Naive thymus-derived CD8-positive, alpha-beta T cell (primary cell): ENCODE measurements at regions of chr2 and their contacts with region 1.

Region 1: GRCh38 chr2:101272045-101272784 is 19.5 kb downstream of the CNOT11 start:
- DNase-seq: no peak
- ATAC-seq: no peak
- H3K4me3 Mint-ChIP-seq: no peak overlapping the region
- H3K27ac Mint-ChIP-seq: peak overlapping the region; percentile 31 to 77 (median 64)
- H3K4me1 Mint-ChIP-seq: peaks cover 13 to 32% (median 25%) of the 10 kb centered on the region in 4 donors
- H3K27me3 Mint-ChIP-seq: no peaks in the 10 kb centered on the region

Region 2: GRCh38 chr2:101291973-101292372 is 19.8 kb after region 1 on chr2:
- POLR2A ChIA-PET with region 1: interaction called, 10 read pairs
- DNase-seq: no peak
- ATAC-seq: no peak
- H3K4me3 Mint-ChIP-seq: no peak overlapping the region
- H3K27ac Mint-ChIP-seq: no peak overlapping the region
- H3K4me1 Mint-ChIP-seq: peaks cover 2 to 51% (median 27%) of the 10 kb centered on the region in 4 donors
- H3K27me3 Mint-ChIP-seq: no peaks in the 10 kb centered on the region